ENCODE measurements at regions of chr1 and their contacts with region 1.

Region 1: GRCh38 chr1:1033009-1033587 is 13.2 kb downstream of the AGRN start:
- DNase-seq: peak; percentile 97
- ATAC-seq: peak; percentile 96
- H3K4me3 Mint-ChIP-seq: peak overlapping the region; percentile 42
- H3K27ac Mint-ChIP-seq: no peak overlapping the region
- H3K4me1 Mint-ChIP-seq: peaks cover 12% of the 10 kb centered on the region
- H3K27me3 Mint-ChIP-seq: peaks cover 23% of the 10 kb centered on the region
- CTCF ChIP-seq: peak; percentile 90

Region 2: DNA sequence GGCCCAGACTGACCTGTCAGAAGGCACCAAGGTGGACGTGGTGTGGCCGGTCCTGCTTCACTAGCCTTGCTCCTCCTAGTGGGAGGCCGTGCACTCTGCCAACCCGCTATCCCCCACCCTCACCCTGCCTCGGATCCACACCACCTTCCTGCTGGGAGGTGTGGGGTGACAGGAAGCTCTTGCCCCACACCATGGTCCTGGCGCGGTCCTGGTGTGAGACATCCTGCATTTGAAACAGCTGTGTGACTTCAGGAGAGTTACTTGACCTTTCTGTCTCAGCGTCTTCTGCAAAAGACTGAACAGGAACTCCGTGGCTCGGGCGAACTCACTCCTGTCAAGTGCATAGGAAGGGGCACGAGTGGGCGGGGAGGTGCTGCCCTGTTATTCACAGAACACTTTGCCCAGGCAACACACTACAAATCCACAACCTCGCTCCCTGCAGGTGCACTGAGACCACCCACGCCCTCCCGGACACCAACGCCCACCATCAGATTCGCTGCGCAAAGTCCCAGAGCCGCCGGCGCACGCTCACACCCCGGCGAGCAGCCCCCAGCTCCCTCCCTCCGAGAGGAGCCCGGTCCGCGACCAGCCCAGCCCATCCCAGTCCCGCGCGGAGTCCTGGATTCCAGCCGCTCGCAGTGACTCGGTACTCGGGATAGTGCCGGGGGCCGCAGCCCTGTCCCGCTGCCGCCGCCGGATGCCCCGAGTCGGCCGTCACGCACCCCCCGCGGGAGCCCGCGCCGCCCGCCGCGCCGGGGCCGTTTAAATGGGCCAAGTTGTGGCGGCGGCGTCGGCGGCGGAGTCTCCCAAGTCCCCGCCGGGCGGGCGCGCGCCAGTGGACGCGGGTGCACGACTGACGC is 109.7 kb before region 1 on chr1 and contains the start of gene SAMD11:
- CTCF ChIA-PET with region 1: no interaction called
- POLR2A ChIA-PET with region 1: no interaction called
- intact Hi-C with region 1: no loop called
- DNase-seq: peak; percentile 61
- ATAC-seq: peak; percentile 25
- H3K4me3 Mint-ChIP-seq: peak within 1 kb of the TSS; percentile 68
- H3K27ac Mint-ChIP-seq: no peak within 1 kb of the TSS
- H3K4me1 Mint-ChIP-seq: peaks cover 15% of the 10 kb centered on the region
- H3K27me3 Mint-ChIP-seq: peaks cover 53% of the 10 kb centered on the region
- CTCF ChIP-seq: no peak
- total RNA-seq, gene SAMD11: not detected

Region 3: DNA sequence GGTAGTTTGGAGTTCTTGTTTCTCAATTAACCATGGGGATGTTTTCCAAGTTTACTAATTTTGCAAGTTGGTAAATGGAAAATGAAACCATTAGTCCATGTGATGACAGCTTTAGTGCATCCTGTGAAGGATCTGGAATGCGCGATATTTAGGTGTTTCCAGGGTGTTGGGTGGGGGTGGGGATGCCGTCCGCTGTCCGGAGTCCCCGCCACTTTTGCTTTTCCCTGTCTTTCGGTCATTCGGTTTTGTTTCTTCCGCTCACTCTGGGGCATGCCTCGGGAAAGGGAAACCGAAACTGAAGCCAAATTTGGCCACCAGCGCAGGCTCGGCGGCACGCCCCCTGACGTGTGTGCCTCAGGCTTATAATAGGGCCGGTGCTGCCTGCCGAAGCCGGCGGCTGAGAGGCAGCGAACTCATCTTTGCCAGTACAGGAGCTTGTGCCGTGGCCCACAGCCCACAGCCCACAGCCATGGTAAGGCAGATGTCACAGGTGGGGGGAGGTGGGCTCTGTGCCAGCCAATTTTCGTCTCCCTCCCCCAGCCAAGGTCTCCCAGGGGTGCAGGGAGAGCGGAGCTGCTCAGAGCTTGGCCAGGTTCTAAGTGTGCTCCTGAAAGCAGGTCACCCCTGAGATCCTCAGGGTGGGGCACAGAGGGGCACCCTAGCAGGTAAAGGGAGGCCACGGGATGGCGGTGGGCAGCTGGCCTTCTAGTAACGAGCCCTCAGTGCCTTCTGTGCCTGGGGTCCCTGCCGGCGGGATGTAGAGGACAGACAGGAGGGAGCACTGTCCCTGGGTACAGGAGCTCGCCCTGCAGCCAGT is 19.8 kb before region 1 on chr1 and contains the start of gene ISG15:
- CTCF ChIA-PET with region 1: interaction called, 12 read pairs
- POLR2A ChIA-PET with region 1: interaction called, 4 read pairs
- intact Hi-C with region 1: no loop called
- DNase-seq: peak; percentile 96
- ATAC-seq: peak; percentile 88
- H3K4me3 Mint-ChIP-seq: peak within 1 kb of the TSS; percentile 93
- H3K27ac Mint-ChIP-seq: peak within 1 kb of the TSS; percentile 86
- H3K4me1 Mint-ChIP-seq: peaks cover 31% of the 10 kb centered on the region
- H3K27me3 Mint-ChIP-seq: no peaks in the 10 kb centered on the region
- CTCF ChIP-seq: no peak
- total RNA-seq, gene ISG15: 94.5 to 102 TPM

Region 4: GRCh38 chr1:1019122-1019999 is 13.7 kb before region 1 on chr1:
- CTCF ChIA-PET with region 1: interaction called, 12 read pairs
- POLR2A ChIA-PET with region 1: interaction called, 5 read pairs
- intact Hi-C with region 1: no loop called
- DNase-seq: peak; percentile 81
- ATAC-seq: peak; percentile 79
- H3K4me3 Mint-ChIP-seq: peak overlapping the region; percentile 66
- H3K27ac Mint-ChIP-seq: no peak overlapping the region
- H3K4me1 Mint-ChIP-seq: peaks cover 19% of the 10 kb centered on the region
- H3K27me3 Mint-ChIP-seq: no peaks in the 10 kb centered on the region
- CTCF ChIP-seq: peak; percentile 48